ENCODE measurements at regions of chr11 and their contacts with region 1.

Region 1: GRCh38 chr11:22787551-22788162 is 41.9 kb downstream of the SVIP start:
- DNase-seq: peak; percentile 53
- ATAC-seq: no peak
- H3K4me3 ChIP-seq: no peak overlapping the region
- H3K27ac ChIP-seq: no peak overlapping the region
- H3K4me1 ChIP-seq: peaks cover 11% of the 10 kb centered on the region
- H3K27me3 ChIP-seq: peaks cover 12% of the 10 kb centered on the region; the same call in 1 of the 2 replicates
- CTCF ChIP-seq: peak; percentile 77

Region 2: GRCh38 chr11:22244986-22245592 is 542.6 kb before region 1 on chr11:
- CTCF ChIA-PET with region 1: no interaction called
- POLR2A ChIA-PET with region 1: no interaction called
- intact Hi-C with region 1: loop called (anchors 2 kb)
- DNase-seq: peak; percentile 50
- ATAC-seq: peak; percentile 67
- H3K4me3 ChIP-seq: no peak overlapping the region
- H3K27ac ChIP-seq: no peak overlapping the region
- H3K4me1 ChIP-seq: no peaks in the 10 kb centered on the region
- H3K27me3 ChIP-seq: peaks cover 10% of the 10 kb centered on the region; the same call in 1 of the 2 replicates
- CTCF ChIP-seq: peak; percentile 65

Region 3: DNA sequence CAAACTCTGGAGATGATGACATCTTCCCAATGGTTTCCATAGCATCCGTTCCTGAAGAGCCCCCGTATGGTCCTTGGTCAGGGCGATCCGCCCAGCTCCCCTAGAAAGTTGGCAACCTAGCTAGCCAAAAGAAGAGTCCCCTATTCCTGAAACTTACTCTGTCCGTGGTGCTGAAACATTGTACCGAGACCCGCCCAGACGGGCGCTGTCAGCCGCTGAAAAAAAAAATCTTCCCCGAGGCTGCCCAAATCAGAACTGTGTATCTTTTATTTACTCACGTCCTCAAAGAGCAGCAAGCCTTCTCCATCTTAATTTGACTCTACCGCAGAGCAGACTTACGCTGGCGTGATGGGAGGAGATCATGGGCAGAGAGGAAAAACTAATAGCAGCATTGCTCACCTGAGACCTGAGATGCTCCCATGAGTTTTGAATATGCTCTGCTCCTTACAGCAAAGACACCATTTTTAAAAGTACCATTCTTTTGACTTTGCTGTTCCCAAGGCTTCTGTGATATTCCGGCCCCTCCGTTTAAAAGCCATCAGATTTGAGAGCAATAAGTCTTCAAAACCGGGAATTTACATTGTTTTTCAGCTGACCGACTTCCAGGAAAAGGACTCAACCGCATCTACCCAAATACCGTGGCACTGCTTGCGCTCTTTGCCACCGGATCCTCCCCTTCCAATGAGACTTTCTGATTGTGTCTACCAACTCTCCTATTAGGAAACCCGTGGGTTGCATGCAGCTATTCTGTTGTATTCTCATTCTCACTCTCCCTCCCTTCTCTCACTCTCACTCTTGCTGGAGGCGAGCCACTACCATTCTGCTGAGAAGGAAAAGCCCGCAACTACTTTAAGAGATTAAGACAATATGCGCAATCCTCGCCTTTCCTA is 449.8 kb before region 1 on chr11 and contains the start of gene SLC17A6:
- CTCF ChIA-PET with region 1: no interaction called
- POLR2A ChIA-PET with region 1: no interaction called
- intact Hi-C with region 1: loop called (anchors 1 kb)
- DNase-seq: peak; percentile 57
- ATAC-seq: no peak
- H3K4me3 ChIP-seq: no peak within 1 kb of the TSS
- H3K27ac ChIP-seq: no peak within 1 kb of the TSS
- H3K4me1 ChIP-seq: no peaks in the 10 kb centered on the region
- H3K27me3 ChIP-seq: peaks cover 48% of the 10 kb centered on the region
- CTCF ChIP-seq: no peak
- total RNA-seq, gene SLC17A6: not detected in 2 replicates

Region 4: GRCh38 chr11:22829231-22830081 is 41.8 kb after region 1 on chr11 and contains the start of gene SVIP:
- CTCF ChIA-PET with region 1: interaction called, 13 read pairs
- POLR2A ChIA-PET with region 1: no interaction called
- intact Hi-C with region 1: no loop called
- DNase-seq: peak; percentile 93
- ATAC-seq: peak; percentile 82
- H3K4me3 ChIP-seq: peak within 1 kb of the TSS; percentile 93
- H3K27ac ChIP-seq: peak within 1 kb of the TSS; percentile 46
- H3K4me1 ChIP-seq: peaks cover 11% of the 10 kb centered on the region
- H3K27me3 ChIP-seq: no peaks in the 10 kb centered on the region
- CTCF ChIP-seq: peak; percentile 60
- total RNA-seq, gene SVIP: 7.4 and 9.5 TPM in 2 replicates

Region 5: DNA sequence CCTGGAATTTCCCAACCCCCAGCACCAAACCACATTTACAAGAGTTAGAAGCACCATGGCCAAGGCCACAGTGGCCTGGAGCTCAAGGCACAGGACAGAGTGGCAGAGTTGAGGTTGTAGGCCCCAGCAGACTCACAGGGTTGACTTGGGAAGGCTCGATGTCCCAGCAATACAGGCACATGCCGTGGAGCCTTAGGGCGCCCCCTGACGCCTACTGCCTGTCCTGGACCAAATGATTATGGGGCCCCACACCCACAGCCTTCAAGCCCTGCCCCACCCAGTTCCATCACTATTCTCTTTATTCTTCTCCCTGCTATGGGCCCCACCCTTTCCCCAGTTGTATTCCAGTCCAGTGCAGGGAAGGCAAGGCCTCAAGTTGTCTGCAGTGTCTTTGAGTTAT is 72.6 kb after region 1 on chr11 and contains the start of gene CCDC179:
- CTCF ChIA-PET with region 1: no interaction called
- POLR2A ChIA-PET with region 1: no interaction called
- intact Hi-C with region 1: no loop called
- DNase-seq: no peak
- ATAC-seq: no peak
- H3K4me3 ChIP-seq: no peak within 1 kb of the TSS
- H3K27ac ChIP-seq: no peak within 1 kb of the TSS
- H3K4me1 ChIP-seq: no peaks in the 10 kb centered on the region
- H3K27me3 ChIP-seq: no peaks in the 10 kb centered on the region
- CTCF ChIP-seq: no peak
- total RNA-seq, gene CCDC179: not detected in 2 replicates

Region 6: GRCh38 chr11:22875869-22876473 is 88.3 kb after region 1 on chr11:
- CTCF ChIA-PET with region 1: no interaction called
- POLR2A ChIA-PET with region 1: no interaction called
- intact Hi-C with region 1: no loop called
- DNase-seq: peak; percentile 89
- ATAC-seq: peak; percentile 76
- H3K4me3 ChIP-seq: no peak overlapping the region
- H3K27ac ChIP-seq: no peak overlapping the region
- H3K4me1 ChIP-seq: no peaks in the 10 kb centered on the region
- H3K27me3 ChIP-seq: no peaks in the 10 kb centered on the region
- CTCF ChIP-seq: peak; percentile 87

Region 7: DNA sequence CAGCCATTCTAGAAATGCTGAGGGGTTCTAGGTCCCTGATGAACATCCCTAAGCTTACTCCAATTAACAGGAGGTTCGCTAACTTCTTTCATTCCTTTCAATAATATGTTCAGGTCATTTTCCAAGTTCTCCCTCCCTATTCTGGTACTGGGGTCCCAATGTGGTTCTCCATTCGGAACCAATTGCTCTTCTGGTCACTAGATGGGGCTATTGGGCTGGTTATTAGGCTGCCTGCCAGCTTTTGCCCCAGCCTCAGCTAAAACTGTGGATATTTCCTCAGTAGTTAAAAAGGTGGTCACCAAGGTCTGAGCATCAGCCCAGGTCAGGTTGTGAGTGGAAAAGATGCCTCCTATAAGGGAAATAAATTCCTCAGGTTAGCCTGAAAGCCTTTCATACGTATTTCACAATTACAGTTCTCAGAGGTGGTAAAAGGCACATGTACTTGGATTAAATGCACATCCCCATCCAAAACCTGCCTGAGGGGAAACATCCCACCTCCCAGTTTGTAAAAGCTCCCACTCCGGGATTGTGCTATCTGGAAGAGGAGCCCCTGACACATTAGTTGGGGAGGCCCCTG is 233.7 kb after region 1 on chr11:
- CTCF ChIA-PET with region 1: no interaction called
- POLR2A ChIA-PET with region 1: no interaction called
- intact Hi-C with region 1: no loop called
- DNase-seq: peak; percentile 56
- ATAC-seq: peak; percentile 39; the same call in 1 of the 2 replicates
- H3K4me3 ChIP-seq: no peak overlapping the region
- H3K27ac ChIP-seq: no peak overlapping the region
- H3K4me1 ChIP-seq: peaks cover 7% of the 10 kb centered on the region; the same call in 1 of the 2 replicates
- H3K27me3 ChIP-seq: no peaks in the 10 kb centered on the region
- CTCF ChIP-seq: peak; percentile 86

Region 8: DNA sequence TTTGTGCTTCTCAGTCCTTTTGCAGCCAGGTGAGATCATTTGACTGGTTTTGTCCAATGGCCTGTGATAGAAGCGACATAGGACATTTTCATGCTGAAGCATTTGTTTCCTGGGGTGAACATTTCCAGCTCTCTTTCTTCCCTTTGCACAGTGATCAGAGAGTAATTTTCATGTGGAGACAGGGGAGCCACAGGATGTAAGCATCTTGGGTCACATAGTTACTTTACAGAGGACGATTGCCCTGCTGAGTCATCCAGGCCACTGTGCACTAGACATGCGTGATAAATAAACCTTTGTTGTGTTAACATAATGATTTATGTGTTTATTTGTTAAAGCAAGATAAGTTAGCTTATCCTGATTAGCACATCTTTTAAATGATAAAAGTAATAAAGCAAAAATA is 336.1 kb after region 1 on chr11:
- CTCF ChIA-PET with region 1: no interaction called
- POLR2A ChIA-PET with region 1: no interaction called
- intact Hi-C with region 1: no loop called
- DNase-seq: peak; percentile 56
- ATAC-seq: peak; percentile 66
- H3K4me3 ChIP-seq: no peak overlapping the region
- H3K27ac ChIP-seq: peak overlapping the region; percentile 56
- H3K4me1 ChIP-seq: peaks cover 32% of the 10 kb centered on the region
- H3K27me3 ChIP-seq: no peaks in the 10 kb centered on the region
- CTCF ChIP-seq: no peak

Measured in PC-3 (cell line).